ENCODE measurements at regions of chr11 and their contacts with region 1.

Region 1: DNA sequence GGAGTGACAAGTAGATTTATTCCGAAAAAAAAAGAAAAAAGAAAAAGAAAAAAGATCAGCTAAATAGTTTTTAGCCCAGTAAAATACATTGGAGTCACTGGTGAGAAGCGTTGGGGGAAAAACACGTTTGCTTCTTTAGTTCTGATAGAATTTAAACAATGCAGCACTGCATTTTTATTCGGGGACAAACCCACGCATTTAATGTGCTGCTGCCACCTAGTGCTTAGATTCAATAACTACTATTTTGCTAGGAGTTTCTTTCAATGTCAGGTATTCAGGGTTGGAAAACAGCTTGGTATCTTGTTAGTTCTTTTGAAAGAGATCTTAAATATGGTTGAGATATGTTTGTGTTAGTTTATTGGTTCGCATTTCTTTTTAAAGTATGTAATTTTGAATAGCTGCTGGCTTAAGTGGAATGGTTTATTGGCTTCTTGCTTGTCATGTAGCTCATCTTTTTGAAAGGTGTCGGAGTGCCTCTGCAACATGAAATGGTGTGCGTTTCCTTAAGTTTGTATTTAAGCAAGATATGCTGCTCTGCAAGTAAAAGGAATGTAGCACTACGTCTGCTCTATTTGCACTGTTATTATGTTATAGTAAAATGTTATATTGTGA is 41.9 kb downstream of the SVIP start:
- DNase-seq: peak; percentile 22 to 54 (median 33)
- ATAC-seq: peak; percentile 70
- H3K4me3 ChIP-seq: no peak overlapping the region
- H3K27ac ChIP-seq: no peak overlapping the region
- H3K4me1 ChIP-seq: peaks cover 0 to 9% of the 10 kb centered on the region in 2 experiments; a peak in 3 of 5 replicates
- H3K27me3 ChIP-seq: no peaks in the 10 kb centered on the region
- CTCF ChIP-seq: peak; percentile 39 to 75 (median 49); a peak in 4 of 6 replicates
- EP300 ChIP-seq: no peak
- POLR2A ChIP-seq: no peak
- RAD21 ChIP-seq: peak; percentile 69 to 89

Region 2: GRCh38 chr11:22244986-22245592 is 542.6 kb before region 1 on chr11:
- CTCF ChIA-PET with region 1: no interaction called
- POLR2A ChIA-PET with region 1: no interaction called
- in situ Hi-C with region 1: no loop called
- intact Hi-C with region 1: loop called (anchors 10 kb)
- DNase-seq: peak in 3 of 4 experiments; percentile 6 to 22 (median 7)
- ATAC-seq: peak; percentile 66
- H3K4me3 ChIP-seq: no peak overlapping the region
- H3K27ac ChIP-seq: no peak overlapping the region
- H3K4me1 ChIP-seq: no peaks in the 10 kb centered on the region
- H3K27me3 ChIP-seq: no peaks in the 10 kb centered on the region
- CTCF ChIP-seq: peak; percentile 14 to 44 (median 34); a peak in 3 of 6 replicates
- EP300 ChIP-seq: no peak
- POLR2A ChIP-seq: no peak
- RAD21 ChIP-seq: peak; percentile 44 to 65

Region 3: GRCh38 chr11:22337596-22338485 is 449.8 kb before region 1 on chr11 and contains the start of gene SLC17A6:
- CTCF ChIA-PET with region 1: interaction called, 16 read pairs
- POLR2A ChIA-PET with region 1: interaction called, 3 read pairs
- in situ Hi-C with region 1: no loop called
- intact Hi-C with region 1: loop called (anchors 1 kb)
- DNase-seq: peak in 2 of 4 experiments; percentile 10 to 44
- ATAC-seq: peak; percentile 41; the same call in 2 of the 3 replicates
- H3K4me3 ChIP-seq: no peak within 1 kb of the TSS
- H3K27ac ChIP-seq: no peak within 1 kb of the TSS
- H3K4me1 ChIP-seq: 0 out of 5 replicates have a peak, but pooled peaks cover 0 to 5% of the 10 kb centered on the region in 2 experiments
- H3K27me3 ChIP-seq: peaks cover 0 to 23% of the 10 kb centered on the region in 2 experiments; a peak in 2 of 5 replicates
- CTCF ChIP-seq: no peak
- EP300 ChIP-seq: no peak
- POLR2A ChIP-seq: no peak
- RAD21 ChIP-seq: no peak
- polyA plus RNA-seq, gene SLC17A6: not detected

Region 4: DNA sequence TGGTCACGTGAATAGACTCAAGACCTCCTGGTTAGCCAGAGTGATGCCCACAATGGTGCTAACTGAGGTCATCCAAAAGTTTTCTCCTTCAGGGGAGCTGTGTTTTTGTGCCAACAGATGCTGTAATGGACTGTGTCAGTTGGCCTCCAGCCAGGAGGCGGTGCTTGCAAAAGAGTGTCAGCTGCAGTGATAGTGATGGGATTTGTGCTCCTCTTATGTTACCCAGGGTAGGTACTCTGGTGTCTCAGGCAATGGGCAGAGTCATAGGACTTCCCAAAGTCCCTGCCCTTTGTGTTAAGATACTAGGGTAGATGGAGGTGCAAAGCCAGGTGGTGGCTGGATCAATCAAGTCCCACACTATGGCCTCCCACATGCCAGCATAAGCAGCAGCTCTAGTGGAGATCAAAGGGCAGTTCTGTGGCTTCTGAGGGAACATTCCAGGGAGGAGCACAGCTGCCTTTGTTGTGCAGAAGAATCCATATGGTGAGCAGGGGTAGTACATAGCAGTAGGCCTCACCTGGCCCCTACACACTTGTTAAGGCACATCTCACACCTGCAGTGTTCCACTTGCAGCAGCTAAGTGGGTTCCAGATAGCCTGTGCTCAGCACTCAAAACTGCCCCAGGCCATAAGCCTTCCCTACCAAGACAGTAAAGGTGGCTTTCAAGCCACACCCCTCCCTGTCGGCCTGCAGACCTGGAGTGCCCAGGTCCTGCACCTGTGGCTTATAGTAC is 152.6 kb before region 1 on chr11:
- CTCF ChIA-PET with region 1: no interaction called
- POLR2A ChIA-PET with region 1: no interaction called
- in situ Hi-C with region 1: no loop called
- intact Hi-C with region 1: no loop called
- DNase-seq: peak in 1 of 4 experiments; percentile 9
- ATAC-seq: peak; percentile 40
- H3K4me3 ChIP-seq: no peak overlapping the region
- H3K27ac ChIP-seq: no peak overlapping the region
- H3K4me1 ChIP-seq: no peaks in the 10 kb centered on the region
- H3K27me3 ChIP-seq: no peaks in the 10 kb centered on the region
- CTCF ChIP-seq: no peak
- EP300 ChIP-seq: no peak
- POLR2A ChIP-seq: no peak
- RAD21 ChIP-seq: no peak

Region 5: DNA sequence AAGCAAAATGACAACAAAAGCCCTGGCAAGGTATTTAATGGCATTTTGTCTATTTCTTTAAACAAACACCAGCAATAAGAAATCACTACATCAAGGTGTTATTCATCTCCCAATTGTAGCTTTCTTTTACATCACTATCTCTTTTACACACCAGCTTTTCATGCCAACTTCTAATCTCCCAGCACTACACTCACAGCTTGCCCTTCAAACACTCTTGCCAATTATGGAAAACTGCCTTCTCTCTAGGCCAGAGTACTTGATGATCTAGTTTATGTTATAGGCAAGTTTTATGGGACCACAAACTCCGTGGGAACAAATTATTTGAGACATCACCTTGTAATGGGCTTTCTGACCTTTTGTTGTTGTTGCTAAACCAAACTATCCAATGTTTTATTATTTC is 19.4 kb before region 1 on chr11:
- CTCF ChIA-PET with region 1: no interaction called
- POLR2A ChIA-PET with region 1: no interaction called
- in situ Hi-C with region 1: no loop called
- intact Hi-C with region 1: no loop called
- DNase-seq: no peak
- ATAC-seq: no peak
- H3K4me3 ChIP-seq: no peak overlapping the region
- H3K27ac ChIP-seq: no peak overlapping the region
- H3K4me1 ChIP-seq: no peaks in the 10 kb centered on the region
- H3K27me3 ChIP-seq: no peaks in the 10 kb centered on the region
- CTCF ChIP-seq: no peak
- EP300 ChIP-seq: no peak
- POLR2A ChIP-seq: no peak
- RAD21 ChIP-seq: no peak

Region 6: GRCh38 chr11:22829231-22830081 is 41.8 kb after region 1 on chr11 and contains the start of gene SVIP:
- CTCF ChIA-PET with region 1: no interaction called
- POLR2A ChIA-PET with region 1: no interaction called
- in situ Hi-C with region 1: no loop called
- intact Hi-C with region 1: loop called (anchors 2 kb)
- DNase-seq: peak; percentile 92 to 96 (median 96)
- ATAC-seq: peak; percentile 96
- H3K4me3 ChIP-seq: peak within 1 kb of the TSS; percentile 80
- H3K27ac ChIP-seq: peak within 1 kb of the TSS; percentile 85
- H3K4me1 ChIP-seq: peaks cover 0 to 7% of the 10 kb centered on the region in 2 experiments; a peak in 2 of 5 replicates
- H3K27me3 ChIP-seq: no peaks in the 10 kb centered on the region
- CTCF ChIP-seq: peak; percentile 71 to 90 (median 86)
- EP300 ChIP-seq: no peak
- POLR2A ChIP-seq: peak; percentile 84
- RAD21 ChIP-seq: peak in 1 of 2 experiments; percentile 45; a peak in 2 of 4 replicates
- polyA plus RNA-seq, gene SVIP: 47.5 to 62.5 TPM

Region 7: DNA sequence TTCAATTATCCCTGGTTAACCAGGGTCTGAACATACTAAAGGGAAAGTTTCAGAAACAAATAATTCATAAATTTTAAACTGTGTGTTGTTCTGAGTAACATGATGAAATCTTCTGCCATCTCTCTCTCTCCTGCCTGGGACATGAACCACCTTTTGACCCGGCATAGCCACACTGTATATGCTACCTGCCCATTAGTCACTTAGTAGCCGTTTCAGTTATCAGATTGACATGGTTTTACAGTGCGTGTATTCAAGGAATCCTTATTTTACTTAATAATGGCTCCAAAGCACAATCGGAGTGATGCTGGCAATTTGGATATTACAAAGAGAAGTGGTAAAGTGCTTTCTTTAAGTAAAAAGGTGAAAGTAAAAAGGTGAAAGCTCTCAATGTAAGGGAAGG is 299.8 kb after region 1 on chr11:
- CTCF ChIA-PET with region 1: no interaction called
- POLR2A ChIA-PET with region 1: no interaction called
- in situ Hi-C with region 1: no loop called
- intact Hi-C with region 1: no loop called
- DNase-seq: no peak
- ATAC-seq: no peak
- H3K4me3 ChIP-seq: no peak overlapping the region
- H3K27ac ChIP-seq: no peak overlapping the region
- H3K4me1 ChIP-seq: no peaks in the 10 kb centered on the region
- H3K27me3 ChIP-seq: no peaks in the 10 kb centered on the region
- CTCF ChIP-seq: no peak
- EP300 ChIP-seq: no peak
- POLR2A ChIP-seq: no peak
- RAD21 ChIP-seq: no peak